ENCODE measurements at regions of chr3 and their contacts with region 1.

Region 1: GRCh38 chr3:42670670-42671069 is 14.7 kb upstream of the KLHL40 start:
- DNase-seq: no peak
- H3K4me3 ChIP-seq: no peak overlapping the region
- H3K27ac ChIP-seq: no peak overlapping the region
- H3K4me1 ChIP-seq: no peaks in the 10 kb centered on the region
- H3K27me3 ChIP-seq: no peaks in the 10 kb centered on the region
- CTCF ChIP-seq: no peak
- POLR2A ChIP-seq: no peak

Region 2: GRCh38 chr3:42613462-42613861 is 57.2 kb before region 1 on chr3:
- intact Hi-C with region 1: loop called (anchors 2 kb)
- DNase-seq: no peak
- H3K4me3 ChIP-seq: no peak overlapping the region
- H3K27ac ChIP-seq: peak overlapping the region in 1 of 2 donors; percentile 30
- H3K4me1 ChIP-seq: peaks cover 0 to 5% of the 10 kb centered on the region in 2 donors
- H3K27me3 ChIP-seq: no peaks in the 10 kb centered on the region
- CTCF ChIP-seq: peak; percentile 38 to 63 (median 56)
- POLR2A ChIP-seq: no peak

Region 3: GRCh38 chr3:42979044-42979972 is 308.6 kb after region 1 on chr3 and contains the start of gene GASK1A:
- intact Hi-C with region 1: no loop called
- DNase-seq: peak in 1 of 2 donors; percentile 62
- H3K4me3 ChIP-seq: peak within 1 kb of the TSS; percentile 63 to 91 (median 67)
- H3K27ac ChIP-seq: peak within 1 kb of the TSS in 1 of 2 donors; percentile 64
- H3K4me1 ChIP-seq: no peaks in the 10 kb centered on the region
- H3K27me3 ChIP-seq: no peaks in the 10 kb centered on the region
- CTCF ChIP-seq: no peak
- POLR2A ChIP-seq: no peak
- total RNA-seq, gene GASK1A: 10.1 to 22.6 (median 20.5) TPM

Measured in breast epithelium (tissue), 4 donors.